H1 (cell line): ENCODE measurements at regions of chr1 and their contacts with region 1.

Region 1: GRCh38 chr1:209354111-209354839 is 229.2 kb upstream of the CAMK1G start:
- DNase-seq: peak; percentile 71 to 78
- H3K4me3 ChIP-seq: no peak overlapping the region
- H3K27ac ChIP-seq: no peak overlapping the region
- H3K4me1 ChIP-seq: peaks cover 0 to 10% (median 1%) of the 10 kb centered on the region in 4 experiments; a peak in 4 of 7 replicates
- H3K27me3 ChIP-seq: no peaks in the 10 kb centered on the region
- CTCF ChIP-seq: peak; percentile 77 to 91 (median 81)
- EP300 ChIP-seq: no peak
- POLR2A ChIP-seq: no peak
- RAD21 ChIP-seq: peak; percentile 89 to 93

Region 2: DNA sequence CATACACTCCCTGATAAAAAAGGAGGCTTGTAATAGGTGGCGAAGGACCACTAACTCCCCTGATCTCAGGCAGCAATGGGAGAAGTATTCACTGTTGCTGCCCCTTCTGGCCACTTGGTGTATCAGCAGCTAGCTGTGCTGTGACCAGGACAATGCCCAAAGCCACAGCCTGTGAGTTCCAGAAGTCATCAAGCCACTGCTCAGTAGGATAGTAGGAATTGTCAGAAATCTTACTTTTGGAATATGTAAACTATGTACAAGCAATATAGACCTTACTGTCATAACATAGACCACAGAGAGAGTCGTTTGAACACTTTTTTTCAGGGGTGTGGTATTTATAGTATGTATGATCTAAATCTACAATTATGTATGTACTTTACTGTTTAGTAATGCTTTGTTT is 19.1 kb before region 1 on chr1:
- CTCF ChIA-PET with region 1: interaction called, 79 read pairs
- POLR2A ChIA-PET with region 1: interaction called, 3 read pairs
- DNase-seq: peak in 1 of 2 experiments; percentile 33
- H3K4me3 ChIP-seq: no peak overlapping the region
- H3K27ac ChIP-seq: no peak overlapping the region
- H3K4me1 ChIP-seq: peaks cover 0 to 3% (median 0%) of the 10 kb centered on the region in 4 experiments; a peak in 1 of 7 replicates
- H3K27me3 ChIP-seq: no peaks in the 10 kb centered on the region
- CTCF ChIP-seq: peak; percentile 67 to 93 (median 88)
- EP300 ChIP-seq: no peak
- POLR2A ChIP-seq: no peak
- RAD21 ChIP-seq: peak; percentile 59 to 69; a peak in 3 of 4 replicates

Region 3: GRCh38 chr1:209375671-209376365 is 21.5 kb after region 1 on chr1:
- CTCF ChIA-PET with region 1: interaction called, 16 read pairs
- POLR2A ChIA-PET with region 1: no interaction called
- DNase-seq: no peak
- H3K4me3 ChIP-seq: no peak overlapping the region
- H3K27ac ChIP-seq: no peak overlapping the region
- H3K4me1 ChIP-seq: peaks cover 0 to 9% (median 6%) of the 10 kb centered on the region in 4 experiments; a peak in 6 of 7 replicates
- H3K27me3 ChIP-seq: no peaks in the 10 kb centered on the region
- CTCF ChIP-seq: no peak
- EP300 ChIP-seq: no peak
- POLR2A ChIP-seq: no peak
- RAD21 ChIP-seq: no peak

Region 4: GRCh38 chr1:209428241-209428921 is 74.1 kb after region 1 on chr1:
- CTCF ChIA-PET with region 1: interaction called, 53 read pairs
- POLR2A ChIA-PET with region 1: interaction called, 5 read pairs
- DNase-seq: peak in 1 of 2 experiments; percentile 62
- H3K4me3 ChIP-seq: peak overlapping the region in 2 of 4 experiments; percentile 11 to 49; a peak in 4 of 8 replicates
- H3K27ac ChIP-seq: peak overlapping the region; percentile 58
- H3K4me1 ChIP-seq: peaks cover 8 to 33% (median 32%) of the 10 kb centered on the region in 4 experiments
- H3K27me3 ChIP-seq: no peaks in the 10 kb centered on the region
- CTCF ChIP-seq: no peak
- EP300 ChIP-seq: no peak
- POLR2A ChIP-seq: peak in 1 of 2 experiments; percentile 57; a peak in 2 of 3 replicates
- RAD21 ChIP-seq: no peak

Region 5: GRCh38 chr1:209490013-209490412 is 135.7 kb after region 1 on chr1:
- CTCF ChIA-PET with region 1: interaction called, 13 read pairs
- POLR2A ChIA-PET with region 1: no interaction called
- DNase-seq: no peak
- H3K4me3 ChIP-seq: no peak overlapping the region
- H3K27ac ChIP-seq: no peak overlapping the region
- H3K4me1 ChIP-seq: no peaks in the 10 kb centered on the region; a peak in 1 of 7 replicates
- H3K27me3 ChIP-seq: peaks cover 0 to 1% (median 0%) of the 10 kb centered on the region in 4 experiments; a peak in 1 of 7 replicates
- CTCF ChIP-seq: peak in 2 of 3 experiments; percentile 25 to 50; a peak in 2 of 4 replicates
- EP300 ChIP-seq: no peak
- POLR2A ChIP-seq: no peak
- RAD21 ChIP-seq: peak; percentile 71 to 78